Spleen (tissue), 13 donors: ENCODE measurements at regions of chr10 and their contacts with region 1.

Region 1: GRCh38 chr10:68301790-68302502 is 29.9 kb upstream of the HNRNPH3 start:
- DNase-seq: no peak
- H3K4me3 ChIP-seq: no peak overlapping the region
- H3K27ac ChIP-seq: peak overlapping the region in 6 of 8 donors; percentile 2 to 84 (median 48)
- H3K4me1 ChIP-seq: peaks cover 5 to 27% (median 20%) of the 10 kb centered on the region in 6 donors
- H3K27me3 ChIP-seq: no peaks in the 10 kb centered on the region
- CTCF ChIP-seq: peak; percentile 42 to 80 (median 71)
- POLR2A ChIP-seq: no peak

Region 2: DNA sequence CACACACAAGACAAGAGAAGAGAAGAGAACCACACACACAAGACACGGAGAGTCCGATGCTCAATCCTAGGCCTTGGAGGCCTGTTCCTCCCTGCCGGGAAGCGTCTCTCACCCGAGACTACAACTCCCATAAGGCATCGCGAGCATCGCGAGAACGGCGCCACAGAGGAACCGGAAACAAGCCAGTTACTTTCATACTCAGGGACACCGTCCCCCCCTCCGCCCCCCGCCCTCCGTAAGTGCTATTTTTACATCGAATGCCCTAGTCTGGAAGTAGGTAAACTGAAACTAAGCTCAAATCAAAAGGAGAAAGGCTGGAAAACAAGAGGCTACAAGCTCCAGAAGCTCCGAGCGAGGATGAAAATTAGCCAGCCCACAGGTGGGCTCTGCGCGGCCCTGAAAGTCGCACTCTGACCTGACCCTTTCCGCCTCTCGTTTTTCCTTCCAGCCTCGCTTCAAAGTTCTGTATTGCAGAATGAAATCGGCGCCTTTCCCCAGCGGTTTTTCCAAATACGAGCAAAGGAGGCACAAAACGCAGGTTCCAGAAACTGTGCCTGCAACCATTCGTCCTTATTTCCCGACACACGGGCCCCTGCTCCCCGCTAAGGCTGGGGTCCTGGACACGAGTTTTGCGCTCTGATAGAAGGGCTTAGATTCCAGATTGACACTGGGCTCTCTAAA is 452.5 kb before region 1 on chr10:
- intact Hi-C with region 1: loop called (anchors 10 kb)
- DNase-seq: peak; percentile 98
- H3K4me3 ChIP-seq: peak overlapping the region; percentile 45 to 91 (median 58)
- H3K27ac ChIP-seq: peak overlapping the region; percentile 87 to 94 (median 90)
- H3K4me1 ChIP-seq: peaks cover 4 to 11% (median 10%) of the 10 kb centered on the region in 6 donors
- H3K27me3 ChIP-seq: no peaks in the 10 kb centered on the region
- CTCF ChIP-seq: peak in 7 of 11 experiments; percentile 10 to 45 (median 12)
- POLR2A ChIP-seq: peak in 1 of 3 donors; percentile 23

Region 3: GRCh38 chr10:68208424-68209042 is 93.4 kb before region 1 on chr10:
- intact Hi-C with region 1: loop called (anchors 5 kb)
- DNase-seq: no peak
- H3K4me3 ChIP-seq: no peak overlapping the region
- H3K27ac ChIP-seq: no peak overlapping the region
- H3K4me1 ChIP-seq: no peaks in the 10 kb centered on the region
- H3K27me3 ChIP-seq: no peaks in the 10 kb centered on the region
- CTCF ChIP-seq: peak in 9 of 11 experiments; percentile 16 to 60 (median 41)
- POLR2A ChIP-seq: no peak